Activated CD4-positive, alpha-beta T cell treated with anti-CD3 and anti-CD28 coated beads, Interleukin-2, amount 10 ng/mL, durations not matched to agents 24 days and 14 days (primary cell): ENCODE measurements at regions of chr12 and their contacts with region 1.

Region 1: DNA sequence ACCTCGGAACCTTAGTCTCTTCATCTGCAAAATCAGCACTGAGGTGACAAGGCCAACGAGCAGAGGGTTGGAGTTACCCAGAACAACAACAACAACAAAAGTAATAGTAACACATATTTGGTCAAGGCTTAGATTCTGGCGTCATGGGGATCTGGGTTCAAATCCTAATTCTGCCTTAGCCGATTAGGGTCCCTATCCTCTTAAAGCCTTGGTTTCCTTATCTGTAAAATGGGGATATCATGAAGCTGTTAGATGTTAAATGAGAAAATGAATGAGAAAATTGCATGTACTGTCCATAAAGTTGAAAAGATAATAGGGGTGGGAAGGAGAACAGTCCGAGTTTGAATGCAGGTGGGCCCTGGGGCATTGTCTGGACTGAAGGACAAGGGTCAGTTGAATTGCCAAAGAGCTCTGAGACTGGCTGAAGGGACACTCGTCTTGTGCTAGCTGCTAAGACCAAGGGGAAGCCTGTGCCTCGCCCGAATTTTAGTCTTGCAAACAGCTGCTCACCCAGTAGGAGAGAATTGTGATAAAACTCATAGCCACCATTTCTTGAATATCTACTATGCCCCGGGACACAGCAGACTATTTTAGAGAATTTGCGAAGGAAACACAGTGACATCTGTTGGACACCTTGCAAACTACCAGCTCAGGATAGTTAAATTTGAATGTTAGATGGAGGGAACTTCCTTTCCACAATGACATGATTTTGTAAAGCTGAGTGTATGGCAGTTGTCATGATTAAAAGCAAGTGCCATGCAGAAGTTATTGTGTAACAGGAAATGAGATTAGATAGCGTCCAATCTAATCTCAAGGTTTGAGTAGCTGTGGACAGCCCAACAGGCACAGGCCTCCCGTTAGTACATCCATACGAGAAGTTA is 6.8 kb upstream of the HNF1A start:
- DNase-seq: peak; percentile 84
- H3K4me3 Mint-ChIP-seq: no peak overlapping the region
- H3K27ac Mint-ChIP-seq: no peak overlapping the region
- H3K4me1 Mint-ChIP-seq: peaks cover 5% of the 10 kb centered on the region
- H3K27me3 Mint-ChIP-seq: no peaks in the 10 kb centered on the region

Region 2: DNA sequence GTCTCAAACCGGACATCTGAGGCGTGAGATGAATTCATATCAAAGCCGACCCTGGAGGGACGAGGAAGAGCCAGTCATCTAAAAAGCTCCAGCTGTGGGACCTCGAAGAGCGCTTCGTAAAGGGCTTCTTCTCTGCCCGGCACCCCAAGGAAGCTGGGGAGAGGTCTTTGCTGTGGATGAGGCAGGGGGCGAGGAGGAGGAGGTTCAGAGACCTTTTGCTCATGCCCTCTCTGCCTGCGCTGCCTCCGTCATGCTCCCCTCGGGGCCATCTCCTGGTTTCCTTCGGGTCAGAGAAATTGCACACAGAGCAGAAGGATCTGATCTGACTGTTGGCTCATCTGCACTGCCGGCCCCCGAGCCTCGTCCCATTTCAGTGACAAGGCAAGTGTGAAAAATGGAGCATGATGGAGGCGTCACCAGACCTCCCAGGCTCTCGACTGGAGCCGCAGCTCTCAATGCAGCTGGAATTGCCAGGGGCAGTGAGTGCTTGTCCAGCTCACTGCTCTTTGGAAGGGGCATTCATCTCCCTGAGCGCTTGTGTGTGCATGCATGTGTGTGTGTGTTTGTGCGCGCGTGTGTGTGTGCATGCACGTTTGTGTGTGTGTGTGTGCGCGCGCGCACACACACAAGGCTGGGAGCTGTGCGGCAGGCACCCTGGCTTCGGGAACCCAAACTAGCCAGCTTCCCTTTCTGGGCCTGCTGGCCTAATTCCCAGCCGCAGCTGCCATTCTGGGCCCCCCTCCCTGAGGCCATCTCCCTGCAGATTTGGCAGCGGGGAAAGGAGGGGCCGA is 321.9 kb before region 1 on chr12:
- intact Hi-C with region 1: loop called (anchors 2 kb)
- DNase-seq: no peak
- H3K4me3 Mint-ChIP-seq: peak overlapping the region; percentile 62
- H3K27ac Mint-ChIP-seq: no peak overlapping the region
- H3K4me1 Mint-ChIP-seq: peaks cover 12% of the 10 kb centered on the region
- H3K27me3 Mint-ChIP-seq: peaks cover 53% of the 10 kb centered on the region

Region 3: DNA sequence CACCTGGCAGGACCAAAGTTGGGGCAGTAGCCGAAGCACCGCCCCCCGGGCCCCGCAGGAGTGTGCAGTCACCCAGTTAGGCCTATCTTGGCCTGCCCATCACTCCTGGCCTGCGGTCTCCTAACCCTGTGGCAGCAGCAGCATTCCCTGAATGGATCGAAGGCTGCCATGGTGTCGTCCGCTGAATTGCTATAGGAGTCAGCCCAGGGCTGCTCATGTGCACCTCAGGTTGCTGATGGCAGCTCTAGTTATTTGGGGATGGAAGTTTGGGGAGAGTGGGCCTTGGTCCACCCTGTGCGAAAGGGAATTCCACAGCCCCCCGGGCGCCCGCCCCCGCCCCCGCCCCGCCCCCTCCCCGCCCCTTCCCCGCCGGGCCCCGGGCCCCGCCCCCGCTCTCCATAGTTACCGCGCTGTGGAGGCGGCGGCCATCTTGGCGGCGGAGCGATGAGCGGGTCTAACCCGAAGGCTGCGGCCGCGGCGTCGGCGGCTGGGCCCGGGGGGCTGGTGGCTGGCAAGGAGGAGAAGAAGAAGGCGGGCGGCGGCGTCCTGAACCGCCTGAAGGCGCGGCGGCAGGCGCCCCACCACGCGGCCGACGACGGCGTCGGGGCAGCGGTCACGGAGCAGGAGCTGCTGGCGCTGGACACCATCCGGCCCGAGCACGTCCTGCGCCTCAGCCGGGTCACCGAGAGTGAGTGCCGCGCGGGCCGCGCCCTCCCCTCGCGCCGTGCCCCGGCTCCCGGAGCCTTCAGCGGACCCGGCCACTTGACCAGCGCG is 261.3 kb before region 1 on chr12 and contains the start of gene UNC119B:
- intact Hi-C with region 1: loop called (anchors 10 kb)
- DNase-seq: peak; percentile 94
- H3K4me3 Mint-ChIP-seq: peak within 1 kb of the TSS; percentile 84
- H3K27ac Mint-ChIP-seq: peak within 1 kb of the TSS; percentile 76
- H3K4me1 Mint-ChIP-seq: peaks cover 23% of the 10 kb centered on the region
- H3K27me3 Mint-ChIP-seq: no peaks in the 10 kb centered on the region
- total RNA-seq, gene UNC119B: 25.5 and 26.2 TPM in 2 replicates

Region 4: GRCh38 chr12:120750806-120751205 is 220.7 kb before region 1 on chr12:
- intact Hi-C with region 1: loop called (anchors 1 kb)
- DNase-seq: no peak
- H3K4me3 Mint-ChIP-seq: no peak overlapping the region
- H3K27ac Mint-ChIP-seq: no peak overlapping the region
- H3K4me1 Mint-ChIP-seq: peaks cover 5% of the 10 kb centered on the region
- H3K27me3 Mint-ChIP-seq: peaks cover 8% of the 10 kb centered on the region

Region 5: DNA sequence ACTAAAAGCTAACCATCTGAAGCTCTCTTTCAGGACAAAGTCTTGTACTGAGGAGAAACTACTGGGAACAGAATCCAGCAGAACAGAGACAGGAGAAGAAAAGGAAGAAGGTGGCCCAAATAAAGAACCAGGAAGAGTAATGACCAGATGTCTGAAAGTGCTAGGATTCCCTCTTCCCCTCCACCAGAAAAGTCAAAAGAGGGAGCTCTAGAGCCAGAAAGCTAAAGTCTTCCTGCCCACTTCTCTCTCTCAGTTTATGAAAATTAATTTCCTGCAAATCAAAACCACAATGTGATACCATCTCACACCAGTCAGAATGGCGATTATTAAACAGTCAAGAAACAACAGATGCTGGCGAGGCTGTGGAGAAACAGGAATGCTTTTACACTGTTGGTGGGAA is 114.6 kb before region 1 on chr12:
- intact Hi-C with region 1: loop called (anchors 10 kb)
- DNase-seq: peak; percentile 57
- H3K4me3 Mint-ChIP-seq: peak overlapping the region; percentile 8
- H3K27ac Mint-ChIP-seq: peak overlapping the region; percentile 59
- H3K4me1 Mint-ChIP-seq: peaks cover 28% of the 10 kb centered on the region
- H3K27me3 Mint-ChIP-seq: peaks cover 2% of the 10 kb centered on the region

Region 6: GRCh38 chr12:120944645-120945231 is 26.8 kb before region 1 on chr12:
- intact Hi-C with region 1: loop called (anchors 1 kb)
- DNase-seq: peak; percentile 89
- H3K4me3 Mint-ChIP-seq: no peak overlapping the region
- H3K27ac Mint-ChIP-seq: no peak overlapping the region
- H3K4me1 Mint-ChIP-seq: peaks cover 6% of the 10 kb centered on the region
- H3K27me3 Mint-ChIP-seq: peaks cover 3% of the 10 kb centered on the region

Region 7: DNA sequence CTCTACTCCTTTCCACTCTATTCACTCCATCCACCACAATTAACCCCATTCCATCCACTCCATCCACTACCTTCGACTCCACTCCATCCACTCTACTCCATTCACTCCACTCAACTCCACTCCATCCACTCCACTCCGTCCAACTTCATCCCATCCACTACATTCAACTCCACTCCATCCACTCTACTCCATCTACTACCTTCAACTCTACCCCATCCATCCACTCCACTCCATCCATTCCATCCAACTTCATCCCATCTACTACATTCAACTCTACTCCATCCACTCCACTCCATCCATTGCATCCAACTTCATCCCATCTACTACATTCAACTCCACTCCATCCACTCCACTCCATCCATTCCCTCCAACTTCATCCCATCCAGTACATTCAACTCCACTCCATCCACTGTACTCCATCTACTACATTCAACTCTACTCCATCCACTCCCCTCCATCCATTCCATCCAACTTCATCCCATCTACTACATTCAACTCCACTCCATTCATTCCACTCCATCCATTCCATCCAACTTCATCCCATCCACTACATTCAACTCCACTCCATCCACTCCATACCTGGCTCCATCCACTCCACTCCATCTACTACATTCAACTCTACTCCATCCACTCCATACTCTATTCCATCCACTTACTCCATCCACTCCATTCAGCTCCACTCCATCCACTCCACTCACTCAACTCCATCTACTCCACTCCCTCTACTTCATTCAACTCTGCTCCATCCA is 23.2 kb after region 1 on chr12:
- intact Hi-C with region 1: no loop called
- DNase-seq: no peak
- H3K4me3 Mint-ChIP-seq: no peak overlapping the region
- H3K27ac Mint-ChIP-seq: no peak overlapping the region
- H3K4me1 Mint-ChIP-seq: no peaks in the 10 kb centered on the region
- H3K27me3 Mint-ChIP-seq: peaks cover 2% of the 10 kb centered on the region